ENCODE measurements at regions of chr17 and their contacts with region 1.

Region 1: GRCh38 chr17:55527540-55528118 is 16.4 kb upstream of the SMIM36 start:
- DNase-seq: peak; percentile 25 to 28
- H3K4me3 ChIP-seq: no peak overlapping the region
- H3K4me1 ChIP-seq: no peaks in the 10 kb centered on the region
- H3K27me3 ChIP-seq: no peaks in the 10 kb centered on the region

Region 2: DNA sequence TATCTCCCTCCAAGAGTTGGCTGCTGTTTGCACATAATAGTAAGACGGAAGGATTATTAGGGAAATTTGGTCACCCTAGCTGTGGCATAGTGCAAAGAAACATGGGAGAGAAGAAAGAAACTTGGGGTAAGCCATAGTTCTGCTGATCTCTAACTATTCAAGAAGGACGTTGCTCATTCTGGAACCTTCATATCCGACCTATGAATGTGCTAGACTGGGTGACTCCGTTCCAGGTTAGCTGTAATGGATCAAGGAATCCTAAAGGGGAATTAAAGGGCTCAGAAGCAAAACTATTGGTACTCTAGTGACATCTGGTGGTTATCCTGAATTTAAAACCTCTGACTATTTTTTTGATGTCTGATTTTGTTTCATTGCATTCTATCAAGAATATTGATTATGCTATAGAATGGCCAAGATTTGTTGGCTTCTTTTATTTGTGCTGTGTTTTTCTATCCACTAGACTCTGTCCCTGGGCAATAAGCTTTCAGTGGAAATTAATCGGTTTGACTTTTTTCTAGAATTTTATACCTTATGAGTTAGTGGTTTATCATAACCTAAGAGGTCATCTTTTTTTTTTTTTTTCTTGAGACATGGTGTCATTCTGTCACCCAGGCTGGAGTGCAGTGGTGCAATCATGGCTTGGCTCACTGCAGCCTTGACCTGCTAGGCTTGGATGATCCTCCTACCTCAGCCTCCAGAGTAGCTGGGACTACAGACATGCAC is 242.7 kb after region 1 on chr17:
- in situ Hi-C with region 1: loop called (anchors 5 kb)
- DNase-seq: peak in 1 of 2 experiments; percentile 65
- H3K4me3 ChIP-seq: no peak overlapping the region
- H3K4me1 ChIP-seq: no peaks in the 10 kb centered on the region
- H3K27me3 ChIP-seq: no peaks in the 10 kb centered on the region

Measured in HAP-1 (cell line).